ENCODE measurements at regions of chr4 and their contacts with region 1.

Region 1: GRCh38 chr4:102868781-102869568 is at the start of gene CISD2:
- DNase-seq: peak; percentile 80
- ATAC-seq: peak; percentile 87
- H3K4me3 ChIP-seq: peak within 1 kb of the TSS; percentile 86
- H3K27ac ChIP-seq: peak within 1 kb of the TSS; percentile 98
- H3K4me1 ChIP-seq: peaks cover 5% of the 10 kb centered on the region; the same call in 1 of the 2 replicates
- H3K27me3 ChIP-seq: no peaks in the 10 kb centered on the region
- CTCF ChIP-seq: no peak
- EP300 ChIP-seq: 0 out of 4 replicates have a peak, but pooled peaks of 1 of the 2 experiments have one; percentile 18
- POLR2A ChIP-seq: peak; percentile 94
- RAD21 ChIP-seq: no peak
- polyA plus RNA-seq, gene CISD2: 52.3 to 55.9 TPM

Region 2: GRCh38 chr4:102500696-102501446 is 368.1 kb before region 1 on chr4 and contains the start of gene NFKB1:
- CTCF ChIA-PET with region 1: no interaction called
- POLR2A ChIA-PET with region 1: interaction called, 5 read pairs
- RAD21 ChIA-PET with region 1: no interaction called
- SMC1A ChIA-PET with region 1: no interaction called
- in situ Hi-C with region 1: no loop called
- intact Hi-C with region 1: loop called (anchors 2 kb)
- DNase-seq: peak; percentile 55
- ATAC-seq: peak; percentile 48
- H3K4me3 ChIP-seq: peak within 1 kb of the TSS; percentile 75
- H3K27ac ChIP-seq: peak within 1 kb of the TSS; percentile 97
- H3K4me1 ChIP-seq: peaks cover 3% of the 10 kb centered on the region; the same call in 1 of the 2 replicates
- H3K27me3 ChIP-seq: no peaks in the 10 kb centered on the region
- CTCF ChIP-seq: no peak
- EP300 ChIP-seq: peak in 1 of 2 experiments; percentile 65; a peak in 1 of 4 replicates
- POLR2A ChIP-seq: peak; percentile 83; the same call in 1 of the 2 replicates
- RAD21 ChIP-seq: no peak
- polyA plus RNA-seq, gene NFKB1: 20.8 to 32.7 TPM

Region 3: DNA sequence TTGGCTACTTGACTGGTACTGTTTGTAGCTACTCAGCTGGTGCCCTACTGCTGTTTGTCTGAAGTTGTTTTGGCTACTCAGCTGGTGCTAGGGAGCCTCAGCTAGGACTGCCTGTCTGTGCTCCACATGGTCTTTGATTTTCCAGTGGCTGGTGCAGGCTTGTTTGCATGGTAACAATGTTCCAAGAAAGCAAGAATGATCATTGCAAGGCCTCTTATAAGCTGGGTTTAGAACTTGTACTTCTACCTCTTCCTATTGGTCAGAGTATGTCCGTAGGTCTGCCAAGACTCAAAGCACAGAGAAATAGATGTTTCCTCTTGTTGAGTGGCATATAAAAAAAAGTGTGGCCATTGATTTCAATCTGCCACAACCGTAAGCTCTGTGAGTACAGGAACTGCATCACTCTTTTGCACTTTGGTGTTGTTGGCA is 350.3 kb before region 1 on chr4:
- CTCF ChIA-PET with region 1: no interaction called
- POLR2A ChIA-PET with region 1: no interaction called
- RAD21 ChIA-PET with region 1: no interaction called
- SMC1A ChIA-PET with region 1: no interaction called
- in situ Hi-C with region 1: no loop called
- intact Hi-C with region 1: no loop called
- DNase-seq: no peak
- ATAC-seq: peak; percentile 46
- H3K4me3 ChIP-seq: no peak overlapping the region
- H3K27ac ChIP-seq: no peak overlapping the region
- H3K4me1 ChIP-seq: peaks cover 10% of the 10 kb centered on the region; the same call in 1 of the 2 replicates
- H3K27me3 ChIP-seq: no peaks in the 10 kb centered on the region
- CTCF ChIP-seq: no peak
- EP300 ChIP-seq: no peak
- POLR2A ChIP-seq: no peak
- RAD21 ChIP-seq: no peak

Region 4: GRCh38 chr4:102687373-102687981 is 181.5 kb before region 1 on chr4:
- CTCF ChIA-PET with region 1: no interaction called
- POLR2A ChIA-PET with region 1: interaction called, 3 read pairs
- RAD21 ChIA-PET with region 1: no interaction called
- SMC1A ChIA-PET with region 1: interaction called, 3 read pairs
- in situ Hi-C with region 1: no loop called
- intact Hi-C with region 1: loop called (anchors 2 kb)
- DNase-seq: peak; percentile 93
- ATAC-seq: peak; percentile 91
- H3K4me3 ChIP-seq: peak overlapping the region; percentile 54; the same call in 1 of the 2 replicates
- H3K27ac ChIP-seq: peak overlapping the region; percentile 90
- H3K4me1 ChIP-seq: peaks cover 36% of the 10 kb centered on the region
- H3K27me3 ChIP-seq: no peaks in the 10 kb centered on the region
- CTCF ChIP-seq: no peak
- EP300 ChIP-seq: peak in 1 of 2 experiments; percentile 69; a peak in 2 of 4 replicates
- POLR2A ChIP-seq: no peak
- RAD21 ChIP-seq: no peak

Region 5: DNA sequence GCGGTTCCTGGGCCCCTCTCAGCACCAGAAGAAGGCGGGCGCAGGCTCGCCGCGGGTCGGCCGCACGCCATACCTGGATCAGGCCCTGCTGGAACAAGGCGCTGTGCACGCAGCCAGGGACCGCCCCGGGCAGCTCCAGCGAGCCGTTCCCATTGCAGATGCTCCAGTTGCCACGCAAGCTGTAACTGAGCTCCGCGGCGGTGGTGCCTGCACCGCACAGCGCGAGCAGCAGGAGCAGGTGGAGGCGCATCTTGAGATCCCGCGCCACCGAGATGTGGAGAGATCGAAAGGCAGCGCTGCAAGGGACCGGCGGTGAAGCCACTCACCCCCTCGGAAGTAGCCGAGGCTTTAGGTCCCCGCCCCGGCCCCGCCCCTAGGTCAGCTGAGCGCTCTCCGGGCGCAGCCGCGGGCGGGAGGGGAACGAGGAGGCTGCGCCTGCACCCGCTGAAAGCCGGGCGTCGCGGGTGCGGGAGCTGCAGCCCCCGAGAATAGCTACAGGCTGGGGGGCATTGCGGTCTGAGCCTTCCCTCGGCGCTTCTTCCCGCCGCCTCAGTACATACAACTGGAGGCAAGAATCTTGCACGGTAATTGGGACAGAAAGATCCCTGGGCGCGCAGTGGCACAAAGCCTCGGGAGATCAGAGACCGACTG is 108.2 kb before region 1 on chr4 and contains the start of gene MANBA:
- CTCF ChIA-PET with region 1: no interaction called
- POLR2A ChIA-PET with region 1: interaction called, 10 read pairs
- RAD21 ChIA-PET with region 1: interaction called, 4 read pairs
- SMC1A ChIA-PET with region 1: interaction called, 5 read pairs
- in situ Hi-C with region 1: no loop called
- intact Hi-C with region 1: loop called (anchors 5 kb)
- DNase-seq: no peak
- ATAC-seq: peak; percentile 94
- H3K4me3 ChIP-seq: peak within 1 kb of the TSS; percentile 98
- H3K27ac ChIP-seq: peak within 1 kb of the TSS; percentile 85
- H3K4me1 ChIP-seq: no peaks in the 10 kb centered on the region; the same call in 1 of the 2 replicates
- H3K27me3 ChIP-seq: no peaks in the 10 kb centered on the region
- CTCF ChIP-seq: no peak
- EP300 ChIP-seq: no peak
- POLR2A ChIP-seq: peak; percentile 97
- RAD21 ChIP-seq: no peak
- polyA plus RNA-seq, gene MANBA: 3.8 to 6.9 TPM

Region 6: GRCh38 chr4:102815981-102816380 is 53.0 kb before region 1 on chr4:
- CTCF ChIA-PET with region 1: interaction called, 4 read pairs
- POLR2A ChIA-PET with region 1: interaction called, 164 read pairs
- RAD21 ChIA-PET with region 1: interaction called, 10 read pairs
- SMC1A ChIA-PET with region 1: interaction called, 16 read pairs
- in situ Hi-C with region 1: no loop called
- intact Hi-C with region 1: no loop called
- DNase-seq: no peak
- ATAC-seq: no peak
- H3K4me3 ChIP-seq: no peak overlapping the region; the same call in 1 of the 2 replicates
- H3K27ac ChIP-seq: no peak overlapping the region
- H3K4me1 ChIP-seq: peaks cover 5% of the 10 kb centered on the region
- H3K27me3 ChIP-seq: no peaks in the 10 kb centered on the region
- CTCF ChIP-seq: no peak
- EP300 ChIP-seq: no peak
- POLR2A ChIP-seq: no peak
- RAD21 ChIP-seq: no peak

Region 7: GRCh38 chr4:103075901-103076739 is 207.1 kb after region 1 on chr4:
- CTCF ChIA-PET with region 1: no interaction called
- POLR2A ChIA-PET with region 1: interaction called, 6 read pairs
- RAD21 ChIA-PET with region 1: interaction called, 7 read pairs
- SMC1A ChIA-PET with region 1: no interaction called
- in situ Hi-C with region 1: no loop called
- intact Hi-C with region 1: loop called (anchors 5 kb)
- DNase-seq: no peak
- ATAC-seq: peak; percentile 75
- H3K4me3 ChIP-seq: peak overlapping the region; percentile 77
- H3K27ac ChIP-seq: peak overlapping the region; percentile 93
- H3K4me1 ChIP-seq: peaks cover 8% of the 10 kb centered on the region
- H3K27me3 ChIP-seq: no peaks in the 10 kb centered on the region
- CTCF ChIP-seq: 0 out of 6 replicates have a peak, but pooled peaks of 1 of the 3 experiments have one; percentile 11
- EP300 ChIP-seq: no peak
- POLR2A ChIP-seq: peak; percentile 89
- RAD21 ChIP-seq: no peak

Measured in GM12878 (cell line).